Gastrocnemius medialis (tissue), 4 donors: ENCODE measurements at regions of chr11 and their contacts with region 1.

Region 1: DNA sequence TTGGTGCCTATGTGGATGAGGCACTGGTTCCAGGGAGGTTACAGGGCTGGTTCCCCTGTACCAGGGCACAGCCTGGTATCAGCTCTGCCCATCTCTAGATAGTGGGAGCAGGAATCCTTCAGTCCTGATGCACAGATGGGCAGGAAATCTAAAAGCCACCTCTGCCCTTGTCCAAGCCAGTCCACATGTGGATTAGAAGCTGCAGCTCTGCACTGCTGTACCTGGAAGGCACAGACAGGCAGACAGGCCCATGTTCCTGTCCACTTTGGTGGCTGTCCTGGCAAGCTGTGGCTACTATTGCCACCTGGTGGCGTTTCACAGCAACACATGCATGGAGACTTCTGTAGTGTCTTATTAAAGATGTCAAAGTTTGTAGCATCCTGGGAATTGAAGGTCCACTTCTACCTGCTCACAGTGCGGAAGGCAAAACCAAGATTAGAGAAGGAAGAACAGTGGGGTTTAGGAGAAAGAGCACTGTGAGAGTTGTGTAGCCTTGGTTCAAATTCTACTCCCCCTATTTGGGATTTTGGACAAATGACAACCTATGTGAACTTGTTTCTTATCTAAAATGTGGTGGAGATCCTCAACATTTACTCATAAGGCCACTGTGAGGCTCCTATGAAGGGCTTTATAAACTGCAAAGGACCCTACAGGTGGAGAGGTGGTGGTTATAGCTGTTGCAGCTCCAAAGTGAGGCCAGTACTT is 30.1 kb downstream of the NAV2 start:
- DNase-seq: peak; percentile 46 to 75
- ATAC-seq: peak; percentile 81 to 94
- H3K4me3 ChIP-seq: no peak overlapping the region
- H3K27ac ChIP-seq: no peak overlapping the region
- H3K4me1 ChIP-seq: no peaks in the 10 kb centered on the region
- H3K27me3 ChIP-seq: no peaks in the 10 kb centered on the region
- CTCF ChIP-seq: peak; percentile 87 to 94 (median 91)
- POLR2A ChIP-seq: no peak

Region 2: GRCh38 chr11:19071255-19071654 is 671.5 kb before region 1 on chr11:
- in situ Hi-C with region 1: loop called in 1 of 4 experiments (anchors 25 kb)
- intact Hi-C with region 1: loop called (anchors 10 kb)
- DNase-seq: peak; percentile 16 to 39
- ATAC-seq: peak; percentile 92 to 95
- H3K4me3 ChIP-seq: peak overlapping the region in 3 of 4 donors; percentile 8 to 25 (median 9)
- H3K27ac ChIP-seq: no peak overlapping the region
- H3K4me1 ChIP-seq: no peaks in the 10 kb centered on the region
- H3K27me3 ChIP-seq: no peaks in the 10 kb centered on the region
- CTCF ChIP-seq: peak; percentile 70 to 92 (median 84)
- POLR2A ChIP-seq: no peak

Region 3: GRCh38 chr11:19311308-19312030 is 431.3 kb before region 1 on chr11:
- in situ Hi-C with region 1: loop called in 2 of 4 experiments (anchors 25 kb)
- intact Hi-C with region 1: no loop called
- DNase-seq: peak in 1 of 2 donors; percentile 29
- ATAC-seq: peak; percentile 73 to 84
- H3K4me3 ChIP-seq: no peak overlapping the region
- H3K27ac ChIP-seq: no peak overlapping the region
- H3K4me1 ChIP-seq: peaks cover 0 to 3% of the 10 kb centered on the region in 2 donors
- H3K27me3 ChIP-seq: no peaks in the 10 kb centered on the region
- CTCF ChIP-seq: peak; percentile 26 to 76 (median 66)
- POLR2A ChIP-seq: no peak

Region 4: DNA sequence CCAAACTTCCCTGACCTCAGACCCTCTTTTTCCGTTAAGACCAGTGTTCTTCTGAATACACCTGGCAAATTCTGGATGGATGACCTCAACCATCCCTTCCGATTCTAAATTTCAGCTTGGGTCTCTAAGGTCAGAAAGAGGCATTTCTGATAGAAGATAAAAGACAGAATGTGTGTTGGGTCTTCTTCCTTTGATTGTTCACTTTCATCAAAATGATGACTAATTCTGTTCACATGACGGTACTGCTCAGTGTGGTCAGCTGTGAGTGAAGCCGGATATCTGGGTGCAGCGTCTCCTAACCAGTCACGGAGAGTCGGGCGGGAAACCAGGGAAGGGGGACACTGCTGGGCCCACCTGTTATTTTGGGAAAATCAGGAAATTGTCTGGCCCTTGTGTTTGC is 181.7 kb before region 1 on chr11:
- in situ Hi-C with region 1: loop called (anchors 5 kb)
- intact Hi-C with region 1: loop called (anchors 1 kb)
- DNase-seq: no peak
- ATAC-seq: no peak
- H3K4me3 ChIP-seq: no peak overlapping the region
- H3K27ac ChIP-seq: no peak overlapping the region
- H3K4me1 ChIP-seq: peaks cover 0 to 9% of the 10 kb centered on the region in 2 donors
- H3K27me3 ChIP-seq: no peaks in the 10 kb centered on the region
- CTCF ChIP-seq: no peak
- POLR2A ChIP-seq: no peak

Region 5: DNA sequence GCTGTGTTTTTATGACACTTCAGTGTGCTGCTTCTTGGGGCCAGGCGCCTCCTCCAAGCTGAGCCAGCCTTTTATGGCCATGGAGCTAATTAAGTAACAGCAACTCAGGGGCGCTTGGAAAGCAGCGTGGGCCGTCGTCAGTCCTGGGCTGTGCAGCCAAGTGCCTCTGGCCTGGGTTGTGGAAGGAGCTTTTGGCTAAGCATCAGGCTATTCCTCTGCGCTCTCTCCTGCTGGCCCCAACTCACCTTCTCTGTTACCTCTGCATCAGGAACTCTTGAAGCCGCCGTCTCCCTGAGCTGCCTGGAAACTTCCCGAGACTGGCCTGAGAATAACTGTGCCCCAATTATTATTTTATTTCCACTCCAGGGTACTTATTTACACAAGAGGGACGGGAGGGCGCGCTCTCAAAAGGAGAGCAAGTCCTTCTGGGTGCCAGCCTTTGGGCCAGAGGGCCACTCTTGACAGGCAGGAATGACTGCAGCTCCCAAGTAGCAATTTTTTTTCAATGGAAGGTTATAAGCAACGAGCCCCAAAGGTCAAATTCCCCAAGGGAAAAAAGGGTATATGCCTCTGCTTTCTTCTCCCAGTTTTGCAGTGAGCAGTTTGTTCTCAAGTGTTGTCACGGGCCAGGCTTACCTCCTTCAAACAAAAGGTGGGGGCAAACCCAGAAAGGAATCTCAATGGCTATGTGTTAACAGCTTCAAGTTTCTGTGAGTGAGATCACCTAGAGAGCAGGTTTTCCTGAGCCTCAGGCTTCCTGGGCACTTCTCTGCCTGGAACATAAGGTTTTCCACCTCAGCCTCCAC is 68.6 kb before region 1 on chr11:
- in situ Hi-C with region 1: no loop called
- intact Hi-C with region 1: loop called (anchors 5 kb)
- DNase-seq: peak; percentile 63 to 79
- ATAC-seq: peak; percentile 76 to 82
- H3K4me3 ChIP-seq: no peak overlapping the region
- H3K27ac ChIP-seq: peak overlapping the region; percentile 20 to 75 (median 58)
- H3K4me1 ChIP-seq: peaks cover 13 to 36% of the 10 kb centered on the region in 2 donors
- H3K27me3 ChIP-seq: no peaks in the 10 kb centered on the region
- CTCF ChIP-seq: no peak
- POLR2A ChIP-seq: no peak

Region 6: DNA sequence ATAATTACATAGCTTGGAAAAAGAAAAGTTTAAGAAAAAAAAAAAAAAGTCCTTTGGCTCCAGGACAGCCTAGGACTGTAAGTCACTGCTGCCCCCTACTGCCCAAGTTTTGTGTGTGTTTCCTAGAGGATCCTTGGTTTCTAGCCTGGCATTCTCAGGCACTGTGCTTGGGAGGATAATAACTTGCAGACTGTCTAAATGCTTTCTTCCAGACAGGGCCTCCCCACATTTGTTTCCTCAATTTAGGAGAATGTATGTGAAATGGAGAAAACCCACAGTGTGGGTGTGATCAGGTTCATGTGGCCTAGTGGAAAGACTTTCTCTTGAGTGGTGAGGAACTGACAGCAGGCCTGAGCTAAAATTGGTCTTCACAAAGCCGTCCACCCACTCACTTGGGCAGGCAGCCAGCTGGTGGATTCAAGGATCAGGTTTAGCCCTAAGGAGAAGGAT is 160.9 kb after region 1 on chr11:
- in situ Hi-C with region 1: loop called in 2 of 4 experiments (anchors 5 to 25 kb)
- intact Hi-C with region 1: loop called (anchors 1 kb)
- DNase-seq: peak; percentile 19 to 59
- ATAC-seq: peak; percentile 78 to 88
- H3K4me3 ChIP-seq: no peak overlapping the region
- H3K27ac ChIP-seq: no peak overlapping the region
- H3K4me1 ChIP-seq: no peaks in the 10 kb centered on the region
- H3K27me3 ChIP-seq: no peaks in the 10 kb centered on the region
- CTCF ChIP-seq: peak; percentile 64 to 84 (median 74)
- POLR2A ChIP-seq: no peak